ENCODE measurements at regions of chr11 and their contacts with region 1.

Region 1: GRCh38 chr11:68436985-68437926 is 23.3 kb upstream of the PPP6R3 start:
- DNase-seq: peak; percentile 87
- H3K4me3 ChIP-seq: no peak overlapping the region
- H3K27ac ChIP-seq: peak overlapping the region; percentile 89
- H3K4me1 ChIP-seq: peaks cover 16% of the 10 kb centered on the region
- H3K27me3 ChIP-seq: no peaks in the 10 kb centered on the region
- CTCF ChIP-seq: peak; percentile 25 to 28
- POLR2A ChIP-seq: peak; percentile 58

Region 2: GRCh38 chr11:68398995-68399851 is 38.0 kb before region 1 on chr11:
- CTCF ChIA-PET with region 1: no interaction called
- POLR2A ChIA-PET with region 1: no interaction called
- dilution Hi-C with region 1: no loop called
- intact Hi-C with region 1: loop called (anchors 5 kb)
- DNase-seq: no peak
- H3K4me3 ChIP-seq: no peak overlapping the region
- H3K27ac ChIP-seq: no peak overlapping the region
- H3K4me1 ChIP-seq: no peaks in the 10 kb centered on the region
- H3K27me3 ChIP-seq: no peaks in the 10 kb centered on the region
- CTCF ChIP-seq: no peak
- POLR2A ChIP-seq: no peak

Region 3: GRCh38 chr11:68471360-68472340 is 34.4 kb after region 1 on chr11:
- CTCF ChIA-PET with region 1: no interaction called
- POLR2A ChIA-PET with region 1: no interaction called
- dilution Hi-C with region 1: no loop called
- intact Hi-C with region 1: no loop called
- DNase-seq: no peak
- H3K4me3 ChIP-seq: no peak overlapping the region
- H3K27ac ChIP-seq: no peak overlapping the region
- H3K4me1 ChIP-seq: peaks cover 8% of the 10 kb centered on the region
- H3K27me3 ChIP-seq: no peaks in the 10 kb centered on the region
- CTCF ChIP-seq: no peak
- POLR2A ChIP-seq: no peak

Measured in endothelial cell of umbilical vein (primary cell).